CD4-positive, alpha-beta T cell (primary cell): ENCODE measurements at regions of chr22 and their contacts with region 1.

Region 1: GRCh38 chr22:30920407-30920806 is 48.2 kb downstream of the MORC2 start:
- DNase-seq: peak; percentile 74 to 91 (median 82)
- ATAC-seq: peak; percentile 80
- H3K4me3 ChIP-seq: peak overlapping the region; percentile 1
- H3K4me3 Mint-ChIP-seq: peak overlapping the region; percentile 60
- H3K27ac ChIP-seq: no peak overlapping the region
- H3K27ac Mint-ChIP-seq: peak overlapping the region; percentile 25
- H3K4me1 ChIP-seq: peaks cover 23% of the 10 kb centered on the region
- H3K4me1 Mint-ChIP-seq: peaks cover 22% of the 10 kb centered on the region
- H3K27me3 ChIP-seq: no peaks in the 10 kb centered on the region
- H3K27me3 Mint-ChIP-seq: no peaks in the 10 kb centered on the region
- CTCF ChIP-seq: peak; percentile 99

Region 2: GRCh38 chr22:30940685-30941362 is 20.4 kb after region 1 on chr22:
- CTCF ChIA-PET with region 1: interaction called, 6 read pairs
- POLR2A ChIA-PET with region 1: interaction called, 33 read pairs
- intact Hi-C with region 1: loop called in 1 of 2 experiments (anchors 2 kb)
- DNase-seq: peak; percentile 25 to 83 (median 55)
- ATAC-seq: peak; percentile 77
- H3K4me3 ChIP-seq: peak overlapping the region; percentile 65
- H3K4me3 Mint-ChIP-seq: peak overlapping the region; percentile 86
- H3K27ac ChIP-seq: peak overlapping the region; percentile 59 to 70
- H3K27ac Mint-ChIP-seq: peak overlapping the region; percentile 92
- H3K4me1 ChIP-seq: peaks cover 83% of the 10 kb centered on the region
- H3K4me1 Mint-ChIP-seq: peaks cover 85% of the 10 kb centered on the region
- H3K27me3 ChIP-seq: no peaks in the 10 kb centered on the region
- H3K27me3 Mint-ChIP-seq: no peaks in the 10 kb centered on the region
- CTCF ChIP-seq: no peak